Psoas muscle (tissue), 8 donors: ENCODE measurements at regions of chr9 and their contacts with region 1.

Region 1: DNA sequence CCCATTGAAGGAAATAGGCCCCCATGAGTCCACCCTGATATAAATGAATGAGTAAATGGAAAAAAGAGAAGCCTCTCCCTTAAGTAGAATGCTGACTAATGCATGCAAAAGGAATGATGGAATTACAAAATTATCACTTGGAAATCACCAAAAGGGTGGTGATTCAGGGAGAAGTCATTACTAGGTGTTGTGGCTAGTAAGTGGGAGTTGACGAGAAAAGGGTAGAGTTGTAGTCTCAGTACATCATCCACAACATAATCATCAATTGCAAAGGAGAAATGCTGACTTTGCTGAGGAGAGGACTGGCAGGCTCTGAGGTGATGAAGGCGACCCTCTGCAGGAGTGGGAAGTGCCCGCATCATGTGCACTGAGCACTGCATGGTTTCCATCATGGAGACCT is 201.5 kb upstream of the S1PR3 start:
- DNase-seq: no peak
- ATAC-seq: no peak
- H3K4me3 ChIP-seq: no peak overlapping the region
- H3K27ac ChIP-seq: no peak overlapping the region
- H3K4me1 ChIP-seq: no peaks in the 10 kb centered on the region
- H3K27me3 ChIP-seq: no peaks in the 10 kb centered on the region
- CTCF ChIP-seq: no peak

Region 2: DNA sequence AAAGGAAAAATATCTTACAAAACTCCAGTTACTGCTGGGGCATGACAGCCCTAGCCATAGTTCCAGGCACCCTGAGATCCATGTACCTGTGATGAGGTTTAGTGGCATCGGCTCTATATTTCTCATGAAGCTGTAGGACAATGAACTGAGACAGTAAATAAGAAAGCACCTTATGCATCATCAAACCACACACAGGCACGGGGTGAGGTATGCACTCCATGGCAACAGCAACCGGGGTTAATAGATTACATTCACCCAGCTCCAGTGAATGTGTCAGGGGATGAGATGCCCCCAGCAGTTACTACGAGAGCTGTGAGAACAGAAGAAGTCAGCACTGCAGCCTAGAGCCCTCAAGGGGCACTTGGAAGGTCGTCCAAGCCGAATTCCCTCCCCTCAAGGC is 39.5 kb after region 1 on chr9:
- intact Hi-C with region 1: no loop called
- DNase-seq: no peak
- ATAC-seq: no peak
- H3K4me3 ChIP-seq: no peak overlapping the region
- H3K27ac ChIP-seq: no peak overlapping the region
- H3K4me1 ChIP-seq: no peaks in the 10 kb centered on the region
- H3K27me3 ChIP-seq: peaks cover 0 to 9% (median 0%) of the 10 kb centered on the region in 3 donors
- CTCF ChIP-seq: no peak

Region 3: DNA sequence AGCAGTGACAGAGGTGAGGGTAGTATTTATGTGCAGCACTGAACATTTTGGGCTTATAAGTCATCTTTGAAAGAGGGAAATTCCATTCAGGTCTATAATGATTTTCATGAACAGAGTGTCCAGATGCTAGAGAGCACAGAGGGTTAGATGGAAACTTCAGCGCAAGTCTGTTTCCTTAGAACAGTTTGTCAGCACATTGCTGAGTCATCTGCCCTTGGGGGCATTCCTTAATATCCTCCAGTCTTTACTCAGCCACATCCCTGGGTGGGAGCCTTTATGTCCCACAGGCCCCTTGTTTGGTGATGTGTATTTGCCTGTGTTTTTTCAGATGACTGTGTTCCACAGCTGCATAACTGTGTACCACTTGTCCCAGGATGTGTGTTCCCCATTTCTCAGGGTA is 63.0 kb after region 1 on chr9:
- intact Hi-C with region 1: loop called in 1 of 2 experiments (anchors 5 kb)
- DNase-seq: no peak
- ATAC-seq: peak in 2 of 4 donors; percentile 52 to 57
- H3K4me3 ChIP-seq: no peak overlapping the region
- H3K27ac ChIP-seq: no peak overlapping the region
- H3K4me1 ChIP-seq: no peaks in the 10 kb centered on the region
- H3K27me3 ChIP-seq: no peaks in the 10 kb centered on the region
- CTCF ChIP-seq: no peak